ENCODE measurements at regions of chr7 and their contacts with region 1.

Region 1: DNA sequence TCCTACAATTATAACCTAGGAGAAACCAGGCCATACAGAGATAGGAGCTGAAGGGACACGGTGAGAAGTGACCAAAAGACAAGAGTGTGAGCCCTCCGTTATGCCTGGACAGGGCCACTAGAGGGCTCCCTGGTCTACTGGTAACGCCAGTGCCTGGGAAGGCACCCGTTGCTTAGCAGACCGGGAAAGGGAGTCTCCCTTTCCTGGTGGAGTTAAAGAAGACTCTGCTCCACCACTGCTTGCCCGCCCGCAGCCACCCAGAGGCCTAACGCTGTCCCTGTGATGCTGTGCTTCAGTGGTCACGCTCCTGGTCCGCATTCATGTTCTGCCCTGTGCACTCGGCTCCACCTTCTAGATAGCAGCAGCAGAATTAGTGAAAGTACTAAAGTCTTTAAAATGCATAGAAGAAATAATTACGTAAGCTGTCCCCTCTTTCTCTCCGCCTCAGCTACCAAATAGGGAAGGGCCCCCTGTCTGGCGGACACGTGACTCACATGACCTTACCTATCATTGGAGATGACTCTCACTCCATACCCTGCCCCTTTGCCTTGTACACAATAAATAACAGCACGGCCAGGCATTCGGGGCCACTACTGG is 34.8 kb downstream of the GRID2IP start:
- DNase-seq: peak; percentile 91
- H3K4me3 ChIP-seq: peak overlapping the region in 6 of 8 donors; percentile 11 to 63 (median 22)
- H3K27ac ChIP-seq: peak overlapping the region in 2 of 8 donors; percentile 5 to 21
- H3K4me1 ChIP-seq: peaks cover 4 to 11% (median 9%) of the 10 kb centered on the region in 6 donors
- H3K27me3 ChIP-seq: peaks cover 0 to 13% (median 0%) of the 10 kb centered on the region in 7 donors
- CTCF ChIP-seq: peak; percentile 48 to 89 (median 80)
- POLR2A ChIP-seq: no peak

Region 2: DNA sequence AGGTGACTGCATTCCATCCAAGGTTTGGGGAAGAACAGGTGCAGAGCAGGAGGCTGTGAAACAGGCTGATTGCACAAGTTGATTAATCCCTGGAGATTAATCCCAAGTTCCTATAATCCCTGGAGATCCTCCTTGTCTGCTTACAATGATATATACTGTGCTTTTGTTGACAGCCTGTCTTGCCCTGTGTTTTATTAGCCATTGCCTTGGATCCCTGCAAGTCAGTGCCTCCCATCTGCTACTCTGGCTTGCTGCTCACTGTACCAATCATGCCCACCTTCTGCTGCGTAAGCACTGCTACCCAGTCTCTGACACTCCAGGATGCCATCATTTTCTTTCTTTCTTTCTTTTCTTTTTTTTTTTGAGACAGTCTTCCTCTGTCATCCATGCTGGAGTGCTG is 419.9 kb before region 1 on chr7:
- intact Hi-C with region 1: no loop called
- DNase-seq: no peak
- H3K4me3 ChIP-seq: no peak overlapping the region
- H3K27ac ChIP-seq: no peak overlapping the region
- H3K4me1 ChIP-seq: no peaks in the 10 kb centered on the region
- H3K27me3 ChIP-seq: peaks cover 0 to 18% (median 0%) of the 10 kb centered on the region in 7 donors
- CTCF ChIP-seq: no peak
- POLR2A ChIP-seq: no peak

Region 3: DNA sequence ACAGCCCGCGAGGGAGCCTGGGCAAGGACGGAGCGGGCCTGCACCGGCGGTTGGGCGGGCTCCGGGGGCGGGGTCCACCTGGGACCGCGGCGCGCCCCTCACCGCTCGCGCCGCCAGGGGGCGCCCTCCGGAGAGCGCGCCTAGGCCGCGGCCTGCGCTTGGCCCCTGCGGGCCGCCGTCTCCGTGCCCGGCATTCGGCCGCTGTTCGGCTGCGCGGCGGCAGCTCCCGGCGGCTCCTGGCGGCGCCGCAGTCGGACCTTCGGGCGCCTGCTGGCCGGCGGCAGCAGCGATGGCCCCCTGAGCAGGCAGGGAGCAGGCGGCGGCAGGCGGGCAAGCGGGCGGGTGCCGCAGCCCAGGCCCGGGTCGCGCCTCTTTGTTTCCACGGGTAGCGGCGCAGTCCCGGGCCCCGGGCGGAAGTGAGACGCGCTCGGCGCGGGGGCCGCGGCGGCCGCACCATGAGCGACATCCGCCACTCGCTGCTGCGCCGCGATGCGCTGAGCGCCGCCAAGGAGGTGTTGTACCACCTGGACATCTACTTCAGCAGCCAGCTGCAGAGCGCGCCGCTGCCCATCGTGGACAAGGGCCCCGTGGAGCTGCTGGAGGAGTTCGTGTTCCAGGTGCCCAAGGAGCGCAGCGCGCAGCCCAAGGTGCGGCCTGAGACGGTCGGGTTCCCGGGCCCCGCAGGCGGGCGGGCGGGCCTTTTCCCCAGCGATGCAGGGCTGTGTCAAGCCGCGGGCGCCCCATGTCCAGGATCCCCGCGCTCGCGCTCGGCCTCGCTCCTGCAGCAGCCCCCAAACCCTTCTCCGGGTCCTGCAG is 73.6 kb after region 1 on chr7 and contains the start of gene INTS15:
- intact Hi-C with region 1: loop called (anchors 10 kb)
- DNase-seq: peak; percentile 96
- H3K4me3 ChIP-seq: peak within 1 kb of the TSS; percentile 63 to 98 (median 87)
- H3K27ac ChIP-seq: peak within 1 kb of the TSS; percentile 81 to 97 (median 92)
- H3K4me1 ChIP-seq: peaks cover 7 to 38% (median 25%) of the 10 kb centered on the region in 6 donors
- H3K27me3 ChIP-seq: no peaks in the 10 kb centered on the region
- CTCF ChIP-seq: peak; percentile 5 to 97 (median 89)
- POLR2A ChIP-seq: peak in 2 of 3 donors; percentile 30 to 72
- total RNA-seq, gene INTS15: 29.8 to 43.9 (median 37.8) TPM